Uterus (tissue), 4 donors: ENCODE measurements at regions of chr14 and their contacts with region 1.

Region 1: GRCh38 chr14:71754422-71755095 is 177.7 kb upstream of the RGS6 start:
- DNase-seq: no peak
- H3K4me3 ChIP-seq: no peak overlapping the region
- H3K27ac ChIP-seq: no peak overlapping the region
- H3K4me1 ChIP-seq: no peaks in the 10 kb centered on the region
- H3K27me3 ChIP-seq: no peaks in the 10 kb centered on the region
- CTCF ChIP-seq: no peak
- POLR2A ChIP-seq: no peak

Region 2: DNA sequence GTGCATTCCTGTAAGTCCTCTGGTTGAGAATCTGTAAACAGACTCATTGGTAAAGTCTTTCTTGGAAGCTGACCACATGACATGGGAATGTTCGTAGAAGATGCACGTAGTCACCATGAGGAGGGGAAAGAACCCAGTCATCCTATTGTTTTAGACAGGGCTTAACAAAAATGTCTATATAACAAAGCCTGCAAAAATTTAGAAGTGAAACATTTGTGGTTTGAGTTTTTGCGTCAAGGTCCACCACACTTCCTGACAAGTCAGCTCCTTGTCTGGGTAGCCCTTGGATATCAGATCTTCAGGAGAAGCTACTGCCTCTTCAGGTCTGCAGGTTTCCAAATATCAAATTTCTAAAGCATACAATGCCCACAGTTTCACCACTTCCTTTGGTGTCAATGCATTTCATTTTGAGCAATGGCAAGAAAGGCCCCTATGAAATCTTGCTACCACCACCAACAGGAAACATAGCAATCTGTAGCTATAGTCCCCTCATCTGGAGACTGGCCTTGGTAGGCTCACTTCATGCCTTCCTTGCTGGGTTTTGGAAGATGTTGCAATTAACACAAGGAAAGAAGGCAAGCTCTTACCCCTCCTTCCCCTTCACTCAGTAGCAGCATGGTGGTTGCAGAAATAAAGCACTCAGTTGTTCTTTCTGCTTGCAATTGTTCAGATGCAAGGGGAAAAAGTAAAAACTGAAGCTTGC is 612.1 kb before region 1 on chr14:
- intact Hi-C with region 1: loop called (anchors 2 kb)
- DNase-seq: no peak
- H3K4me3 ChIP-seq: no peak overlapping the region
- H3K27ac ChIP-seq: no peak overlapping the region
- H3K4me1 ChIP-seq: no peaks in the 10 kb centered on the region
- H3K27me3 ChIP-seq: no peaks in the 10 kb centered on the region
- CTCF ChIP-seq: no peak
- POLR2A ChIP-seq: no peak

Region 3: DNA sequence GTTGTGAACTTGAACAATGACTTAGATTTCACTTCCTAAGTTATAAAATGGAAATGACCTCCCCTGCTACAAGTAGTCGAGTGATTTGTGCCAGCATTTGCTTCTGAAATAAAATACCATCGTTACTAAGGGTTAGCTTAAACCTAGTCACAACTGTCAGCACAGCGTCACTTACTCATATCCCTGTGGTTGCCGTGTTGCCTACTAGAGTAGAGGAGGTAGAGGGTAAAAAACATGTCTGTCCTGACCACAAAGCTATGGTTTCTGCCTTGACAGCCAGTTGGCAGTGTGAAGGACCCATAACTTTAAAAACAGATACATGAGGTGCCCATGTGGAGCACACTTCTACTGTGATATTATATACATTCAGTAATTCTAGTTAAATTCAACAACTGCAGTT is 56.5 kb before region 1 on chr14:
- intact Hi-C with region 1: no loop called
- DNase-seq: no peak
- H3K4me3 ChIP-seq: no peak overlapping the region
- H3K27ac ChIP-seq: no peak overlapping the region
- H3K4me1 ChIP-seq: no peaks in the 10 kb centered on the region
- H3K27me3 ChIP-seq: no peaks in the 10 kb centered on the region
- CTCF ChIP-seq: no peak
- POLR2A ChIP-seq: no peak

Region 4: GRCh38 chr14:71711619-71712018 is 42.9 kb before region 1 on chr14:
- intact Hi-C with region 1: no loop called
- DNase-seq: no peak
- H3K4me3 ChIP-seq: no peak overlapping the region
- H3K27ac ChIP-seq: no peak overlapping the region
- H3K4me1 ChIP-seq: no peaks in the 10 kb centered on the region
- H3K27me3 ChIP-seq: no peaks in the 10 kb centered on the region
- CTCF ChIP-seq: no peak
- POLR2A ChIP-seq: no peak

Region 5: DNA sequence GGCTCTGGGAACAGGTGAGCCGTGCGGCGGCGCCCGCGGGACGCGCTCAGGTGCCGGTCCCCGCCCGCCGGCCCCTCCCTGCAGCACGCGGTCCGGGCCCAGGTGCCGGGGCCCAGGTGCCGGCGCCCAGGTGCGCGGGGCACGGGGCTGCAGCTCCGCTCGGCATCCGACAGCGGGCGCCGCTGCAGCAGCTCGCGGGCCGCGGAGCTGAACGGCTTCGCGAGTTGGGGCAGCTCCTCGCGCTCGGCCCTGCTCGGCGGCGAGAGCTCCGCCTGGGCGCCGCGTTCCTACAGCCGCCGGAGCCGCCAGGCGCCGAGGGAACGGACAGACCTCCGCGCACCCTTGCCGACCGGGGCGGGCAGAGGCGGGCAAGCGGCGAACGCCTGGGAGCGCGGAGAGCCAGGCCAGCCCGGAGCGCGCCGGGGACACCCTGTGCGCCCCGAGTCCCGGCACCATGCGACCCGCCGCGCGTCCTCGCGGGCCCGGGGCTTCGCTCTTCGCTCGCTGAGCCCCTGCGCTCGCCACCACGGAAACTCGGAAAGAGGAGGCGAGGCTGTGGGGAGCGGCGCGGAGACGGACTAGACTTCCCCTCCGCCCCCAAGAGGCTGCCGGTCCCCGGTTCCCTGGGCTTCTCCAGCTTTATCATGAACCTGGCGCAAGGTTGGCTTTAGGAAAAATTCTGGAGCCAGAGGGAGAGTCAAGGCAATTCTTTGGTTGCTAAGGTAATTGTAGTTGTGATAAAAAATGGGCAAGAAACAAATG is 177.8 kb after region 1 on chr14 and contains the start of gene RGS6:
- intact Hi-C with region 1: no loop called
- DNase-seq: no peak
- H3K4me3 ChIP-seq: peak within 1 kb of the TSS; percentile 16 to 31
- H3K27ac ChIP-seq: no peak within 1 kb of the TSS
- H3K4me1 ChIP-seq: peaks cover 0 to 9% of the 10 kb centered on the region in 2 donors
- H3K27me3 ChIP-seq: peaks cover 0 to 25% of the 10 kb centered on the region in 2 donors
- CTCF ChIP-seq: no peak
- POLR2A ChIP-seq: no peak
- total RNA-seq, gene RGS6: 1.0 to 7.4 (median 6.2) TPM in 3 of 4 donors, not detected in the other